ENCODE measurements at regions of chr12 and their contacts with region 1.

Region 1: GRCh38 chr12:68538726-68539614 is 71.7 kb upstream of the RAP1B start:
- DNase-seq: peak; percentile 55 to 75
- H3K4me3 ChIP-seq: peak overlapping the region; percentile 35 to 36
- H3K27ac ChIP-seq: peak overlapping the region; percentile 59 to 75
- H3K4me1 ChIP-seq: peaks cover 0 to 25% (median 8%) of the 10 kb centered on the region in 4 donors
- H3K27me3 ChIP-seq: no peaks in the 10 kb centered on the region
- CTCF ChIP-seq: no peak

Region 2: DNA sequence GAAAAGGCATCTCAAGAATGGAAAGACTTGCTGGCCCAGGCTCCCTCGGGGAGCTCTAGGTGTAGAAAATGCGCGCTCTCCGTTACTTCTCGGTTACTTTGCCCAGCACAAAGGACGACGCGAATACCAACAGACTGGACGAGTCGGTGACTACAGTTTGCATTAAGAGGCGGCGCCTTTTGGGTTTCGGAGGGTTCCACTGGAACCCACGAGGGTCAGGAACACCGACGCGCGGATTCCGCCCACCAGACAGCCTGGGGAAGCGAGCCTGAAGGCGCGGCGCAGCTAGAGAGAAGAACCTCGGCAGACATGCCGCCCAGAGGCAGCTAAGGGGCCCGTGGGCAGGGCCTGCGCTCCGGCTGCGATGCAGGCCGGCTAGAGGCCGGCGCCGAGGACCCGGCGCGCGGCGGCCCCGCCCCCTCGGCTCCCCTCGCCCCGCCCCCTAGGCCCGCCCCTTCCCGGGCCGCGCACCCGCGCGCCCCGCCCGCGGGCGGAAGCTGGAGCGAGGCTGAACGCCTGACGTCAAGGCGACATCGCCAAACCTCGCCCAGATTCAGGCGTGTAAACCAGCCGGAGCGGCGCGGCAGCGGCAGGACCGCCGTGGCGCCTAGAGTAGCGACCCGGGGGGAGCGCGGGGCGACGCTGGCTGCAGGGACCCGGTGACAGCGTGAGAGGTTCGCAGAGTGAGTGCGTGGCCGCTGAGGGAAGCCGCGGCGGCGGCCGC is 71.6 kb after region 1 on chr12 and contains the start of gene RAP1B:
- intact Hi-C with region 1: loop called (anchors 10 kb)
- DNase-seq: peak; percentile 82 to 94
- H3K4me3 ChIP-seq: peak within 1 kb of the TSS; percentile 57 to 80
- H3K27ac ChIP-seq: peak within 1 kb of the TSS; percentile 88 to 96
- H3K4me1 ChIP-seq: peaks cover 0 to 41% (median 22%) of the 10 kb centered on the region in 4 donors
- H3K27me3 ChIP-seq: no peaks in the 10 kb centered on the region
- CTCF ChIP-seq: no peak

Measured in tibial artery (tissue), 4 donors.